WTC11 (cell line): ENCODE measurements at regions of chr16 and their contacts with region 1.

Region 1: GRCh38 chr16:17578921-17579874 is 108.4 kb upstream of the XYLT1 start:
- DNase-seq: peak; percentile 83
- ATAC-seq: peak; percentile 99
- H3K4me3 Mint-ChIP-seq: no peak overlapping the region
- H3K27ac Mint-ChIP-seq: peak overlapping the region; percentile 53
- H3K4me1 Mint-ChIP-seq: peaks cover 10% of the 10 kb centered on the region
- H3K27me3 Mint-ChIP-seq: peaks cover 2% of the 10 kb centered on the region
- CTCF ChIP-seq: peak; percentile 75

Region 2: GRCh38 chr16:17476414-17477270 is 102.6 kb before region 1 on chr16:
- CTCF ChIA-PET with region 1: interaction called, 11 read pairs
- POLR2A ChIA-PET with region 1: no interaction called
- DNase-seq: peak; percentile 77
- ATAC-seq: peak; percentile 96
- H3K4me3 Mint-ChIP-seq: no peak overlapping the region
- H3K27ac Mint-ChIP-seq: peak overlapping the region; percentile 64
- H3K4me1 Mint-ChIP-seq: peaks cover 21% of the 10 kb centered on the region
- H3K27me3 Mint-ChIP-seq: peaks cover 2% of the 10 kb centered on the region; the same call in 1 of the 2 replicates
- CTCF ChIP-seq: no peak

Region 3: GRCh38 chr16:17509204-17509603 is 70.0 kb before region 1 on chr16:
- CTCF ChIA-PET with region 1: no interaction called
- POLR2A ChIA-PET with region 1: no interaction called
- DNase-seq: no peak
- ATAC-seq: no peak
- H3K4me3 Mint-ChIP-seq: no peak overlapping the region
- H3K27ac Mint-ChIP-seq: no peak overlapping the region
- H3K4me1 Mint-ChIP-seq: no peaks in the 10 kb centered on the region
- H3K27me3 Mint-ChIP-seq: peaks cover 4% of the 10 kb centered on the region
- CTCF ChIP-seq: no peak

Region 4: GRCh38 chr16:17556276-17557052 is 22.7 kb before region 1 on chr16:
- CTCF ChIA-PET with region 1: interaction called, 34 read pairs
- POLR2A ChIA-PET with region 1: no interaction called
- DNase-seq: peak; percentile 13
- ATAC-seq: peak; percentile 69; the same call in 1 of the 2 replicates
- H3K4me3 Mint-ChIP-seq: no peak overlapping the region
- H3K27ac Mint-ChIP-seq: no peak overlapping the region
- H3K4me1 Mint-ChIP-seq: peaks cover 5% of the 10 kb centered on the region; the same call in 1 of the 2 replicates
- H3K27me3 Mint-ChIP-seq: no peaks in the 10 kb centered on the region; the same call in 1 of the 2 replicates
- CTCF ChIP-seq: peak; percentile 55; the same call in 1 of the 2 replicates

Region 5: GRCh38 chr16:17565605-17566004 is 13.6 kb before region 1 on chr16:
- CTCF ChIA-PET with region 1: interaction called, 34 read pairs
- POLR2A ChIA-PET with region 1: no interaction called
- DNase-seq: no peak
- ATAC-seq: no peak
- H3K4me3 Mint-ChIP-seq: no peak overlapping the region
- H3K27ac Mint-ChIP-seq: no peak overlapping the region
- H3K4me1 Mint-ChIP-seq: no peaks in the 10 kb centered on the region
- H3K27me3 Mint-ChIP-seq: no peaks in the 10 kb centered on the region
- CTCF ChIP-seq: no peak

Region 6: DNA sequence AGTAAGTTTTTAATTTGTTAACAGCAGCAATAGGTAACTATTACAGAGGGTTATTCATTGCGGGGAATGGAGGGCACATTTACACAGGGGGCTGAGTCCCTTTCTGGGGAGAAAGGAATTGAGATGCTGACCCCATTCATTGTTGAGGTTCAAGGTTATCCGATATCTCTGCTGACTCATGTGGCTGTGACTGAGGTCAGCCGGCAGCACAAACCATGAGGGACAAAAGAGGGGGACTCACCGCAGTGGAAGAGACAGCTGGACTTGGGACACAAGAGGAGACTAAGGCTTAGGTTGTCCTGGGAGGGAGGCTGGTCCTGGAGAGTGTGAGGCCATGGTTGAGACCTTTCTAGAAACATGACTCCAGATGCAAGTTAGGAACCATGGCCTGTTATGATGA is 10.7 kb after region 1 on chr16:
- CTCF ChIA-PET with region 1: interaction called, 15 read pairs
- POLR2A ChIA-PET with region 1: no interaction called
- DNase-seq: no peak
- ATAC-seq: no peak
- H3K4me3 Mint-ChIP-seq: no peak overlapping the region
- H3K27ac Mint-ChIP-seq: no peak overlapping the region
- H3K4me1 Mint-ChIP-seq: 0 out of 2 replicates have a peak, but pooled peaks cover 3% of the 10 kb centered on the region
- H3K27me3 Mint-ChIP-seq: no peaks in the 10 kb centered on the region; the same call in 1 of the 2 replicates
- CTCF ChIP-seq: no peak

Region 7: DNA sequence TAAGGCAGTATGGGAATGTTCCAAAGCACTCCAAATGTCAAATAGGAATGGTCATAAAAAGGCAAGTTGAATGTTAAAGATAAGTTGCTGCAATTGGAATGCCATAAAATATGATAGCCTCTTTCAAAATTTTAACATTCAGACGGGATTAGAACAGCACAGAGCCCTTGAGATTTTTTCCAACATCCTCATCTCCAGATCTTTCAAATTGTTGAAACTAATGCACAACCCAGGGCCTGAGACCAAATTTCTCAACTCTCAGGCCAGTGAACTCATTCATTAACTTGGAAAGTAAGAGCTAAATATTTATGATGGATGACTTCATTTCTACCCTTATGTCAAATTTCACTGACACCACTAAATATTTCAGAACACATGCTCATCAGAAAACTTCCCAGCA is 238.1 kb after region 1 on chr16:
- CTCF ChIA-PET with region 1: interaction called, 10 read pairs
- POLR2A ChIA-PET with region 1: no interaction called
- DNase-seq: no peak
- ATAC-seq: no peak
- H3K4me3 Mint-ChIP-seq: no peak overlapping the region
- H3K27ac Mint-ChIP-seq: peak overlapping the region; percentile 57; the same call in 1 of the 2 replicates
- H3K4me1 Mint-ChIP-seq: peaks cover 19% of the 10 kb centered on the region
- H3K27me3 Mint-ChIP-seq: no peaks in the 10 kb centered on the region
- CTCF ChIP-seq: no peak